Common myeloid progenitor, CD34-positive (primary cell): ENCODE measurements at regions of chr9 and their contacts with region 1.

Region 1: DNA sequence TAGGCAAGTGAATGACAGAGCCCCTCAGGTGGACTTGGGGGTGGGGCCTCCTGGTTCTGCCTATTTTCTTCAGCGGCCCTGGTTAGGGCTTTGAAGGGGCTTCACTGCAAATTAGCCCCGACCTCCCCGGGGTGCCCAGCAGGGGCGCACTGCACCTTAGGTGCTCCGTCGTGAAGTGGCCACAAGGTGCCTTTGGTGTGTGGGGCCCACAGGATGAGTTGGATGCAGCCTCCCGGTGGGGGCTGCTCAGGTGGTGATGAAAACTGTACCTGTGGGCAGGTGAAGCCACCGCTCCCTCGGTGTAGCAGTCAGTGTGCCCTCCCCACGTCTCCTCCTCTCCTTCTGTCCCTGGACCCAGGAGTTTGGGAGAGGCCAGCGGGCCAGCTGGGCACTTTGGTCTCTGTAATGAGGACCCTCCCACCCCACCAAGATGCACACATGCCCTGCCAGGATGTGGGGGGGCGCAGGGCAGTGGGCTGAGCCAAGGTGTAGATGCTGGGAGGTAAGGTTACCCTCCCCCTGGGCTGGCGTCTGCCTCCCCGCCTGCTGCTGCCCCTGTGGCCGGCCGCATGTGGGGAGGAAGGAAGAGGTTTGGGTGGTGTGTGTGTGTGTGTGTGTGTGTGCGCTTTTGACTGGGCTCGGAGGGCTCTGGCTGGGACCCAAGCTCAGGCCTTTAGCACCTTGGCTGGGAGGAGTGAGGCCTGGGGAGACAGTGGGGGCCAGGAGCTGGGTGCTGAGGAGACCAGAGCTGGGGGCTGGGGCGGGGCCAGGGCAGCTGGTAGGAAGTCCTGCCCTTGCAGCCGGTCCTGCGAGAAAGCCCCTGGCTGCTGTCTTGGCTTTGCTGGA is 55.6 kb downstream of the RXRA start:
- DNase-seq: peak; percentile 87 to 94 (median 93)
- H3K4me3 ChIP-seq: peak overlapping the region in 4 of 7 experiments; percentile 26 to 60 (median 50)
- H3K27ac ChIP-seq: no peak overlapping the region
- H3K4me1 ChIP-seq: peaks cover 0 to 91% (median 82%) of the 10 kb centered on the region in 4 experiments
- H3K27me3 ChIP-seq: no peaks in the 10 kb centered on the region

Region 2: DNA sequence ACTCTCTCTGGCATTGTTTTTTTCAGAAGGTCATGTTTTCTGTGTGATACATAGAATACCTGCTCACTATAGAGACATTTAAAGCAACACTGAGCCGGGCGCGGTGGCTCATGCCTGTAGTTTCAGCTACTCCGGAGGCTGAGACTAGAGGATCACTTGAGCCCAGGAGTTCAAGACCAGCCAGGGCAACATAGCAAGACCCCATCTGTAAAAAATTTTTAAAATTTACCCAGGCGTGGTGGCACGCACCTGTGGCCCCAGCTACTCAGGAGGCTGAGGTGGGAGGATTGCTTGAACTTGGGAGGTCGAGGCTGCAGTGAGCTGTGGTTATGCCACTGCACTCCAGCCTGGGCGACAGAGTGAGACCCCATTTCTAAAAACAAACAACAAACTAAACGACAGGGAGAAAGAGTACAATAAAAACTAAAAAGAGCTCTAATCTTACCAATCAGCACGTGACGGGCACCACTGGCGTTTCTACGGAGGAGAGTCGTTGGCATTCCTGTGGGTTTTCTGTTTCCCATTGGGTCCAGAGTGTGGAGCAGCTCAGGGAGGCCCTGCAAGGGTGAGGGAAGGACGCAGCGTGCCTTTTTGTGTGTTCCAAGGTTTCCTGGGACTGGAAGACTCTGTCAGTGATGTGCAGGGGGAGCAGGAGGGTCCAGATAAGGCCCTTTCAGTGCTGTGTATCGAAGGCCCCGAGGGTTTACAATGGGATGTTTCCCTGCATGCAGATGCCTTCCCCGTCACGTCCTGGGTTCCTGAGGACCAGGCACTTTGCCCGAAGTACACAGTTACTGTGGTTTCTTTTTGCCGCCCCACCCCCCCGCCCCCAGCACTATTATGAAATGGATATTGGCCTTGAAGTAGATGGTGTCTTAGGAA is 210.3 kb before region 1 on chr9:
- CTCF ChIA-PET with region 1: interaction called, 11 read pairs
- POLR2A ChIA-PET with region 1: no interaction called
- DNase-seq: no peak
- H3K4me3 ChIP-seq: no peak overlapping the region
- H3K27ac ChIP-seq: no peak overlapping the region
- H3K4me1 ChIP-seq: peaks cover 3 to 46% (median 37%) of the 10 kb centered on the region in 4 experiments
- H3K27me3 ChIP-seq: no peaks in the 10 kb centered on the region

Region 3: DNA sequence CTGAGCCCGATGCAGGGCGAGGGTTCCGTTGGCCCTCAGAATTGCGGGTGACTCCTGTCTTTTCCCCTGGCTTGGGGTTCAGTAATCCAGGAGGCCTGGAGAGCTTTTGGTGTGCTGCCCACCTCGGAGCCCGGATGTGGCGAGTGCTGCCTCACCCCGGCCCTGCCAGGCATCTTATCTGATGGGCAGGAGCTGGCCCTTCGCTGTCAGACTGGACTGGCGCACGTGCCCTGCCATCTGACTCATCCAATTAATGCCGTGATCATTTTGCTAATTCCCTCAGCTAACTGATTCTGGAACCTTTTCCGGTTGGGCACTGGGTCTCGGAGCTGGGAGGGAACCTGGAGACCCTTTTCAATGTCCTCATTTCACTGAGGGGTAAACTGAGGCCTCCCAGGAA is 21.0 kb before region 1 on chr9:
- CTCF ChIA-PET with region 1: interaction called, 10 read pairs
- POLR2A ChIA-PET with region 1: no interaction called
- DNase-seq: no peak
- H3K4me3 ChIP-seq: no peak overlapping the region
- H3K27ac ChIP-seq: no peak overlapping the region
- H3K4me1 ChIP-seq: peaks cover 0 to 66% (median 51%) of the 10 kb centered on the region in 4 experiments
- H3K27me3 ChIP-seq: no peaks in the 10 kb centered on the region

Region 4: GRCh38 chr9:134399435-134400056 is 17.7 kb after region 1 on chr9:
- CTCF ChIA-PET with region 1: interaction called, 55 read pairs
- POLR2A ChIA-PET with region 1: interaction called, 6 read pairs
- DNase-seq: peak in 1 of 3 donors; percentile 19
- H3K4me3 ChIP-seq: no peak overlapping the region
- H3K27ac ChIP-seq: no peak overlapping the region
- H3K4me1 ChIP-seq: peaks cover 3 to 94% (median 67%) of the 10 kb centered on the region in 4 experiments
- H3K27me3 ChIP-seq: no peaks in the 10 kb centered on the region

Region 5: DNA sequence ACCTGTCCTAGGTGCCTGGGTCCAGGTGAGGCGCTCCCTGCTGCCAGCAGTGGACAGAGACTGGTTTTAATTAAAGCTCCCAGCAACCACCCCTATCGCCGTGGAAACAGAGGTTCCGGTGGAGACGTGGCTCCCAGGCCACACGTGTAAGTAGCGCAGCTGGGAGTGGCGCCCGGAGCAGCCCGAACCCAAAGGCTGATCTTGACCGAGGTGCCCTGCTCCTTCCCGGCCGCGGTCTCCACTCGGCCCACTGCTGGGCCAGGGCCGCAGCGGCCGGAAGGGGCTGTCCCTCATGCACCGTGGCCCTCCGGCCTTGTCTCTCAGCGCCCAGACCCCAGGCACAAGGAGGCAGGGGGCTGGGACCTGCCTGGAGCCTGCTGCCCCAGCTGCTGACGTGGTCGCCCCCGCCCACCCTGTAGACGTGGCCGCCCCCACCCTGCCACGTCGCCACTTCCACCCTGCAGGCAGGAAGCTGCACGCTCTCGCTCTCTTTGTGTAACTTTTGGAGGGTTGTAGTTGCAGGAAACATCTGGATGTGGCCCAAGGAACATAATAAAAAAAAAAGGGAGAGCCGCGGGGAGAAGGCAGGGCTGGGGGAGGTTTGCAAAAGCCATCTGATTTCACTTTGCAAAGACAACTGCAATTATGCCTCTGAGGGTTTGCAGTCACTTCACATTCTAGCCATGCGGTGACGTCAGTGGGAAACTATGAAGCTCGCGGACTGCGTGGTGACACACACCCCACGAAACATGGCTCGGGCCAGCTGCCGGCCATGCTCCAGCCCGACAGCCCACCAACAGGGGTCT is 74.2 kb after region 1 on chr9:
- CTCF ChIA-PET with region 1: no interaction called
- POLR2A ChIA-PET with region 1: no interaction called
- DNase-seq: peak; percentile 97 to 100 (median 99)
- H3K4me3 ChIP-seq: peak overlapping the region in 4 of 7 experiments; percentile 42 to 57 (median 48)
- H3K27ac ChIP-seq: peak overlapping the region; percentile 74 to 89
- H3K4me1 ChIP-seq: peaks cover 0 to 65% (median 52%) of the 10 kb centered on the region in 4 experiments
- H3K27me3 ChIP-seq: no peaks in the 10 kb centered on the region